Spleen (tissue), 13 donors: ENCODE measurements at regions of chr16 and their contacts with region 1.

Region 1: GRCh38 chr16:81204798-81205680 is 33.5 kb upstream of the BCO1 start:
- DNase-seq: no peak
- H3K4me3 ChIP-seq: no peak overlapping the region
- H3K27ac ChIP-seq: no peak overlapping the region
- H3K4me1 ChIP-seq: no peaks in the 10 kb centered on the region
- H3K27me3 ChIP-seq: peaks cover 0 to 22% (median 0%) of the 10 kb centered on the region in 7 donors
- CTCF ChIP-seq: peak in 10 of 11 experiments; percentile 15 to 69 (median 54)
- POLR2A ChIP-seq: no peak

Region 2: DNA sequence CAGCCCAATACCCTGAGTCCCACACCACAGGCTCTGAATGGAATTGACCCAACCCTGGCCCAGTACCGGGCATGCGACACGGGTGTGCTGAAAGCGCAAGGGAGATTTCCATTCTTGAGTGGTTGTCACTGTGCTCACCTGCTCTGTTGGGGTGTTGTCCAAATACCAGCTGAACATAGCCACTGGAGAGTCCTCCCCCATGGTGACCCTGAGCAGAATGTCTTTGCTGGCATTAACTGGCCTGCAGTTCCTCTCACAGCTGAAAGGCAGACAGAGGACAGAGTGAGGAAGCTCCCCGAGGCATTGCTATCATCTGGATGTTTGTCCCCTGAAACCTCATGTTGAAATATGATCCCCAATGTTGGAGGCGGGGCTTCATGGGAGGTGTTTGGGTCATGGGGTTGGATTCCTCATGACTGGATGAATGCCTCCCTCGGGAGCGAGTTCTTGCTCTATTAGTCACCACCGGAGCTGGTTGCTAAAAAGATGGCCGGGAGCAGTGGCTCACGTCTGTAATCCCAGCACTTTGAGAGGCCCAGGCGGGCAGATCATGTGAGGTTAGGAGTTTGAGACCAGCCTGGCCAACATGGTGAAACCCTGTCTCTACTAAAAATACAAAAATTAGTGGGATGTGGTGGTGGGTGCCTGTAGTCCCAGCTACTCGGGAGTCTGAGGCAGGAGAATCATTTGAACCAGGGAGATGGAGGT is 23.9 kb before region 1 on chr16:
- intact Hi-C with region 1: no loop called
- DNase-seq: no peak
- H3K4me3 ChIP-seq: no peak overlapping the region
- H3K27ac ChIP-seq: peak overlapping the region in 1 of 8 donors; percentile 16
- H3K4me1 ChIP-seq: no peaks in the 10 kb centered on the region
- H3K27me3 ChIP-seq: peaks cover 0 to 12% (median 0%) of the 10 kb centered on the region in 7 donors
- CTCF ChIP-seq: no peak
- POLR2A ChIP-seq: no peak

Region 3: DNA sequence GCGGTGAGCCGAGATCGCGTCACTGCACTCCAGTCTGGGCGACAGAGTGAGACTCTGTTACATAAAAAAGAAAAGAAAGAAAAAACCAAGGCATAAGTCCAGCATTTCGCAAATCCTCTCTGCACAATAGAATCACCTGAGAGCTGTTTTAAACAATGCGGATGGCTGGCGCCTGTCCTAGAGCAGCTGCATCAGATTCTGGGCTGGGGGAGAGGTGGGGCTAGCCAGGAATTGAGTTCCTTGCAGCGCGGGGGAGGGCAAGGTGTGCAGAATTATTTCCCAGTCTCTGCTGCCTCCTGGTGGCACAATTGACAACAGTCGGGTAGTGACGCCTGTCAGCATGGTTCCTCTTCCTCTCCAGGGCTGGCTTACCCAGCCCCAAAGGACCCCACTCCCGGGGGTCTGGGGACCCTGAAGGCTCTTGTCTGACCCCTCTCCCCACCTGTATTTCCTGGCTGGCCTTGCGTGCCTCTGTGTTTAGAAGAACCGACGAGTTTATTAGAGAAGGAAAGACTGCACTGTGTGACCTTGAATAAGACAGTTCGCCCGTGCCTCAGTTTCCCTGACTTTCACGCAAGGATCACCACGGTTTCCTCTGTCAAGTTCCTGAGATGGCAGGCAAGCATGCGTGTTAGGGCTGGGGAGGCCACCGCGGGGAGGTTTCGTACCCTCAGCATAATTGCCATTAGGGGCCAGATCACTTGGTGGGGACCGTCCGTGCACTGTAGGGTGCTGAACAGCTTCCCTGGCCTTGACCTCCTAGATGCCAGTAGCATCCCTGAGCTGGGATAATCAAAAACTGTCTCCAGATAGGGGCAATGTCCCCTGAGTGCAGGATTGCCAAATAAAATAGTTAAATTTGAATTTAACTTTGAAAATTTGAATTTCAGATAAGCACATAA is 533.1 kb after region 1 on chr16:
- intact Hi-C with region 1: loop called (anchors 5 kb)
- DNase-seq: peak; percentile 94
- H3K4me3 ChIP-seq: peak overlapping the region in 7 of 8 donors; percentile 8 to 59 (median 22)
- H3K27ac ChIP-seq: peak overlapping the region in 7 of 8 donors; percentile 74 to 92 (median 85)
- H3K4me1 ChIP-seq: peaks cover 14 to 55% (median 39%) of the 10 kb centered on the region in 6 donors
- H3K27me3 ChIP-seq: no peaks in the 10 kb centered on the region
- CTCF ChIP-seq: peak; percentile 86 to 97 (median 94)
- POLR2A ChIP-seq: no peak